Activated CD8-positive, alpha-beta T cell treated with anti-CD3 and anti-CD28 coated beads, Interleukin-2, amount 10 ng/mL, durations not matched to agents 7 days and 5 days (primary cell): ENCODE measurements at regions of chr17 and their contacts with region 1.

Region 1: DNA sequence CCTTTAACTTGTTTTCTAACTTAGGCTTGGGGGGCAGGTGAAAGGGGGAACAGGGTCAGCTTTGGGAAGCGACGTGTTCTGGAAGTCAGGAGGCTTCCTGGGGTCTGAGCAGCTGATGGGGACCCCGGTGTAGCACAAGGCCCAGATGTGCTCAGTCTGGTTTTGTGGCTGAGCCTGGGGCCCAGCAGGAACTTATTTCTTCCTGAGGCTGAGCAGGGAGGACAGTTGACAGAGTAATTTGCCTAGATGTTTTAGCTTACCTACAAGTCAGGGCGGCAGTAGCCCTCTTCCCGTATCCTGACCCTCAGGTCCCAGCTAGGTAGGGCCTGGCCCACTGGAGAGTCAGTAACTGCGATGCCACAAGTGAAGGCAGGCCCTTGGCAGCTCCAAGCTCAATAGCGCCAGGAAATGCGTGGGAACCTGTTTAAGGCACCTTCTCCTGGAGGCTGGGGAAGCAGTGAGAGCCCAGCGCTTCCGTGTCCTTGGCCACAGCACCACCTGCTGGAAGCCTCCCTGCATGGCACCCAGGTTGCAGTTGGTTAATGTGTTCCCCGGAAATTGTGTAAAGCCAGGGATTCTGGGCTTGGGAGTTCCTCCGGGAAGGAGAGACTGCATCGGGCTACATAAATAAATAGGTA is 5.2 kb downstream of the CCR7 start:
- DNase-seq: peak; percentile 89
- ATAC-seq: peak; percentile 41
- H3K4me3 Mint-ChIP-seq: peak overlapping the region; percentile 86
- H3K27ac Mint-ChIP-seq: peak overlapping the region; percentile 93
- H3K4me1 Mint-ChIP-seq: peaks cover 89% of the 10 kb centered on the region
- H3K27me3 Mint-ChIP-seq: no peaks in the 10 kb centered on the region

Region 2: DNA sequence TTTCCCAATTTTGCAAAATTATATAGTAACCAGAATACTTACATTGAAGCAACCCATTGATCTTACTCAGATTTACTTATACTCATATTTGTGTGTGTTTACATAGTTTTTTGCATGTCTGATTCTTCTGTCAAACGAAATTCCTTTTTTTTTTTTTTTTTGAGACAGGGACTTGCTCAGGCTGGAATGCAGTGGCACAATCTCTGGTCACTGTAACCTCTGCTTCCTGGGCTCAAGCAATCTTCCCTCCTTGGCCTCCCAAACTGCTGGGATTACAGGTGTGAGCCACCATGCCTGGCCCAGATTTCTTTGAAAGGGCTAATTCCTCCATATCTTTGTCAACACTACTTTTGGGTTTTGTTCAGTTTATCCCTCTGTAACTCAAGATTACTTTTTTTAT is 172.4 kb before region 1 on chr17:
- CTCF ChIA-PET with region 1: interaction called, 10 read pairs
- POLR2A ChIA-PET with region 1: no interaction called
- DNase-seq: no peak
- ATAC-seq: no peak
- H3K4me3 Mint-ChIP-seq: no peak overlapping the region
- H3K27ac Mint-ChIP-seq: no peak overlapping the region
- H3K4me1 Mint-ChIP-seq: no peaks in the 10 kb centered on the region
- H3K27me3 Mint-ChIP-seq: no peaks in the 10 kb centered on the region

Region 3: GRCh38 chr17:40427002-40427491 is 133.0 kb before region 1 on chr17:
- CTCF ChIA-PET with region 1: interaction called, 17 read pairs
- POLR2A ChIA-PET with region 1: interaction called, 3 read pairs
- DNase-seq: peak; percentile 63
- ATAC-seq: peak; percentile 93
- H3K4me3 Mint-ChIP-seq: peak overlapping the region; percentile 3
- H3K27ac Mint-ChIP-seq: peak overlapping the region; percentile 83
- H3K4me1 Mint-ChIP-seq: peaks cover 36% of the 10 kb centered on the region
- H3K27me3 Mint-ChIP-seq: peaks cover 11% of the 10 kb centered on the region

Region 4: DNA sequence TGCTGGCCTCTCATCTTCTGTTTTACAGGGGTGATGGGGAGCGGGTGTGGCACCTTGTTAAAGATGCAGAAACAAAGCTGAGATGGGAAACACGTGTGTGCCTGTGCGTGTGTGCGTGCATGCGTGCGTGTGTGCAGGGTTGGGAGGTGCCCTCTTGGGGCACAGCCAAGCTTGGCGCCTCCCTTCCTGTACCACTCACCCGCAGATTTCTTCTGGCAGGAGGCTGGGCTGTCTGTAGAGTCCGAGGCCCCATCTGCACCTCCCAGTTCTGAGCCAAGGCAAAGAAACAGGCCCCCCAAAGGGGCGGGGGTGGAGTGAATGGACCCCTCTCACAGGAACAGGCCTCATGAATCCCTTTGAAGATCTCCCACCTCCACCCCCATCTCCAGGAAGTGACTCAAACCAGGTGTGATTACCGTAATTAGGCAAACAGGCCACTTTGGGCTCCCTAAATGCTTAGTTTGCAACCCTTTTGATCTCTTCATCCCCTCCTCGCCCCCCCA is 79.5 kb before region 1 on chr17:
- CTCF ChIA-PET with region 1: interaction called, 17 read pairs
- POLR2A ChIA-PET with region 1: interaction called, 3 read pairs
- DNase-seq: peak; percentile 91
- ATAC-seq: peak; percentile 91
- H3K4me3 Mint-ChIP-seq: peak overlapping the region; percentile 70
- H3K27ac Mint-ChIP-seq: peak overlapping the region; percentile 98
- H3K4me1 Mint-ChIP-seq: peaks cover 87% of the 10 kb centered on the region
- H3K27me3 Mint-ChIP-seq: no peaks in the 10 kb centered on the region

Region 5: DNA sequence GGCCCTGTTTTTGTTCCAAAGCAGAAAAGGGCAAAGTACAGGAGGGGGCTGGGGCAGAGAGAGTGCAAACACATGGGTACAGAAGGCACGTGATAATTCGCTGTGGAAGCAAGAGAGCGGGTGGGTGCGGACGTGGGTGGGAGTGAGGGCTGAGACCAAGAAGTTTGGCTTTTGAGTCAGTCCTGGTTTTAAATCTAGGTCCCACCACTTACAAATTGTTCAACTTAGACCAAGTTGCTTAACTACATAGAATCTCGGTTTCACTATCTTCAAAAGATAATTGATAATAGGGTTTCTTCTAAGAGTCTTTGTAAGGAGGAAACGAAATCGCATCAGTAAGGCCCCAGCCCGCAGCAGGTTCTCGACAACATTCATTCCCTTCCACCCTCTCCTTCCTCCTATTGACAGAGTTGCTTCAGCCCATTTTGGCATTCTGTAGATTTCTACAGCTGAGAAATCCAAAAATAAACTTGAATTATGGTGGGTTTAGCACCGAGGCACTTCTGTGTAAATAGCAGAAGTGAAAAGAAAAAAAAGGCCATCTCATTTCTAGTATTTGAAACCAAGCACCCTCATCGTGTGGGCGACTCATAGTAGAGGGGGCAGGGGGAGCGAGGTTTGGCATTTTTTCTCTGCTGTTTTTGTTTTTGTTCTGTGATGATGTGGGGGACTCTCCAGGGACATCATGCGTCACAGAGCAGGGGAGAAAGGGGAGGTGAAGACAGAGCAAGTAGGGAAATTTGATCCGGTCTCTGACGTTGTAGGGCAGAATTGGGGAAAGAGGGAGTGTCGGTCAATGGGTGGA is 38.8 kb after region 1 on chr17:
- CTCF ChIA-PET with region 1: interaction called, 92 read pairs
- POLR2A ChIA-PET with region 1: interaction called, 454 read pairs
- DNase-seq: peak; percentile 67
- ATAC-seq: peak; percentile 35
- H3K4me3 Mint-ChIP-seq: peak overlapping the region; percentile 69
- H3K27ac Mint-ChIP-seq: peak overlapping the region; percentile 95
- H3K4me1 Mint-ChIP-seq: peaks cover 94% of the 10 kb centered on the region
- H3K27me3 Mint-ChIP-seq: no peaks in the 10 kb centered on the region

Region 6: DNA sequence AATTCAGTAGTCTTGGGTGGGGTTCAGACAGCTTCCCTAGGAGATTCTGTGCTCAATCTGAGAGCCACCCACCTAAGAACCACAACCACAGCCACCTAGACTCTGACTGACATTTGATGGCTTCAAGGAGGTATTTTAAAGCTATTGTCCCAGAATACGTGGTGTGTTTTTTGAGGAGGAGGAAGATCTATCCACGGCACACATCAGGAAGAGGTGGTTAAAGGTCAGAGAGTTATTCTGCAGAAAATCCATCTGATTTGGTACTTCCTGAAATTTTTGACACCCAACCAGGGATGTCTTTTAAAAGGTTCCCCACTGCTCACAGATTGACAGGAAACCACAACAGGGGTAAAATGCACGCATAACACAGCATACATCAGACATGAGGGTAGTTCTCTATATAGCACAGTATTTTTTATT is 62.4 kb after region 1 on chr17:
- CTCF ChIA-PET with region 1: interaction called, 313 read pairs
- POLR2A ChIA-PET with region 1: interaction called, 454 read pairs
- DNase-seq: peak; percentile 69
- ATAC-seq: peak; percentile 74
- H3K4me3 Mint-ChIP-seq: peak overlapping the region; percentile 20
- H3K27ac Mint-ChIP-seq: peak overlapping the region; percentile 57
- H3K4me1 Mint-ChIP-seq: peaks cover 70% of the 10 kb centered on the region
- H3K27me3 Mint-ChIP-seq: no peaks in the 10 kb centered on the region